ENCODE measurements at regions of chr1 and their contacts with region 1.

Region 1: GRCh38 chr1:171801487-171801891 is 20.0 kb downstream of the METTL13 start:
- DNase-seq: no peak
- ATAC-seq: peak in 1 of 2 donors; percentile 46

Region 2: DNA sequence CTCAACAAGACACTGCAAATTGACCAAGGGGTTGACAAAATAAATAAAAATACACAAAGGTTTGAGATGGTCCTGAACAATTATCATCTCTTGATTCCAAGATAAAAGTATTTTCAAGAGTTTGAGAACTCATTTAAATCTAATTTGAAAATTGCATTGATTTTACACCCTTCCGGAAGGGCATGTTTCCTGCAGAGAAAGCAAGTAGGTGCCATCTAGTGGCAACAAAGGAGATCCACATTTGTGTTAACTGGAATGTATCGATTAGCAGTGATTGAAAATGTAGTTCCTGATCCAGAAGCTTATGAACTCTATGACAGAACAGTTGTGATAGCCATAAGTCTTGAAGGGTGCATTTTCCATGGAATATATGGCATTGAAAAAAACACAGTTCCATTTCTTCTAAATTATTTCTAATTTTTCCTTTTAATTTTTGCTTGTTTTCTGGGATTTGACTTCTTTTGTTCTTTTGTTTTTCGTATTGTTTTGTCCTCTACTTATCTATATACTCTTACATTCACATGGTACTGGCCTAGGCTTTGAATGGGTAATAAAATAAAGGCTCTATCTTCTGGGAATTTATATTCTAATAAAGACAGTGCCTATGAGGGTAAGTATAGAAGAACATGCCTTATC is 183.5 kb after region 1 on chr1:
- intact Hi-C with region 1: loop called (anchors 1 to 2 kb)
- DNase-seq: no peak
- ATAC-seq: peak; percentile 52 to 53